ENCODE measurements at regions of chr19 and their contacts with region 1.

Region 1: GRCh38 chr19:47190167-47190727 is 40.8 kb downstream of the BBC3 start:
- DNase-seq: peak in 8 of 9 experiments; percentile 18 to 80 (median 59)
- ATAC-seq: peak; percentile 39
- H3K4me3 ChIP-seq: no peak overlapping the region
- H3K4me3 Mint-ChIP-seq: peak overlapping the region; percentile 38
- H3K27ac ChIP-seq: peak overlapping the region in 1 of 2 experiments; percentile 9
- H3K27ac Mint-ChIP-seq: peak overlapping the region; percentile 94
- H3K4me1 ChIP-seq: peaks cover 70% of the 10 kb centered on the region
- H3K4me1 Mint-ChIP-seq: peaks cover 65% of the 10 kb centered on the region
- H3K27me3 ChIP-seq: no peaks in the 10 kb centered on the region
- H3K27me3 Mint-ChIP-seq: no peaks in the 10 kb centered on the region
- CTCF ChIP-seq: no peak

Region 2: GRCh38 chr19:46944918-46945628 is 245.2 kb before region 1 on chr19:
- CTCF ChIA-PET with region 1: no interaction called
- POLR2A ChIA-PET with region 1: no interaction called
- intact Hi-C with region 1: no loop called
- DNase-seq: peak in 1 of 9 experiments; percentile 15
- ATAC-seq: no peak
- H3K4me3 ChIP-seq: no peak overlapping the region
- H3K4me3 Mint-ChIP-seq: no peak overlapping the region
- H3K27ac ChIP-seq: no peak overlapping the region
- H3K27ac Mint-ChIP-seq: no peak overlapping the region
- H3K4me1 ChIP-seq: no peaks in the 10 kb centered on the region
- H3K4me1 Mint-ChIP-seq: peaks cover 36% of the 10 kb centered on the region
- H3K27me3 ChIP-seq: no peaks in the 10 kb centered on the region
- H3K27me3 Mint-ChIP-seq: no peaks in the 10 kb centered on the region
- CTCF ChIP-seq: no peak

Region 3: DNA sequence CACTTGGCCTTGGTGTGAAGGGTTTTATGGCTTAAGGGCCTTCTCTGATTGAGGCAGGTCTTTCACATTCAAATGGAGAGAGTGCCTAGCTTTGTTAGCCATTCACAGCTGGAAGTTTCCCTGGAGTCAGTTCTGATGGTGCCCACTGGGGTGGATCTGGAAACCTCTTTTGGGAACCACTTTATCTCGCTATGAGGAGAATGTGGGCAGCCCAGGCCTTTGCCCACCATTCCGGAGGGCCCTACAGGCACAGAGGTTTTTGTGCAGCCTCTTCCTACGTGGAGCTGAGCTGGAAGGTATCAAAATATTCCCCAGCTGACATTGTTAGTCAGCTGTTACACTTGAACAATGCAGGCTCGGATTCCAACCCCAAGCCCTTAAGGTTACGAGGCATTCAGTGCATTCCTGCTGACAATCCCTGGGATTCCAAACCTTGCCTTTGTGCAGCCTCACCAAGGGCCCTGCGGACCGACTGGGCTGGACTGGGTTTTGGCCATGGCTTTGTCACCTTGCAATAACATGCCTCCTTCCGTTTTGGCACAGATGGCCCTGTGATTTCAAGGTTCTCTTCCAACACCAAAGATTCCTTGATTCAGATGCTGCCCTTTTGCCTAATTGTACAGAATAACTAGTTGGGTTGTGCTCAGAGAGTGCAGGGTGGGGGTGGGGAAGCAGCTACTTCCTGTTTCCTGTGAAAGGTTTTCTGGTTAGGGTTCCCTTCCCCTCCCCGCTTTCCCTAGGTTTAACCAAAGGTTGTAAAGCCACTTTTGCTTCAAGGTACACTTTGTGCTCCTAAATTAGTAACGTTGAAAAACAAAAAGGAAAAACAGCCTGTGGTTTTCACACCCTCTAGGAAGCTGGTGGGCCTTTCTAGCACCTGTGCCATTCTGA is 32.6 kb before region 1 on chr19:
- CTCF ChIA-PET with region 1: interaction called, 19 read pairs
- POLR2A ChIA-PET with region 1: interaction called, 36 read pairs
- intact Hi-C with region 1: loop called (anchors 1 kb)
- DNase-seq: peak in 6 of 9 experiments; percentile 37 to 80 (median 64)
- ATAC-seq: peak; percentile 22
- H3K4me3 ChIP-seq: peak overlapping the region; percentile 14 to 42
- H3K4me3 Mint-ChIP-seq: peak overlapping the region; percentile 74
- H3K27ac ChIP-seq: peak overlapping the region; percentile 41 to 48
- H3K27ac Mint-ChIP-seq: peak overlapping the region; percentile 95
- H3K4me1 ChIP-seq: peaks cover 61% of the 10 kb centered on the region
- H3K4me1 Mint-ChIP-seq: peaks cover 73% of the 10 kb centered on the region
- H3K27me3 ChIP-seq: no peaks in the 10 kb centered on the region
- H3K27me3 Mint-ChIP-seq: no peaks in the 10 kb centered on the region
- CTCF ChIP-seq: no peak

Region 4: DNA sequence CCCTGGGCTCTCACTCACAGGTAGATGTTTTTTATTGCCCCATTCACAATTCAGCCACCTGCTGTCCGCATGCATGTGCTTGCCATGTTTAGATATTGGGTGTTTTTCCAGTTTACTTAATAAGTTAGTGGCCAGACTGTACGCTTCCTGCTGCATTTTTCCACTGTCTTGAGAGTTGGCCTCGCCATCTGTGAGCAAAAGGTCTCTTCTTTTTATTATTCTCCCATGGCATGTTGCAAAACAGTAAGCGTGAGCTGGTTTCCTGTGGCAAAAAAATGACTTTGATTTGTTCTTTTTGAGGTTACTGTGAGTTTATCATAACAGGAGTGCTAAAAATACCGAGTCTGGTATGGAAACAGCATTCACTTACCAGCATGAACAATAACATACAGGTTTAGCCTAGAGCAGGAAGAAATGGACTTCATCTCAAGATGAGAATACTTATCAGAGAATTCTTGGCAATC is 13.6 kb before region 1 on chr19:
- CTCF ChIA-PET with region 1: interaction called, 20 read pairs
- POLR2A ChIA-PET with region 1: interaction called, 47 read pairs
- intact Hi-C with region 1: loop called (anchors 1 kb)
- DNase-seq: peak in 8 of 9 experiments; percentile 12 to 77 (median 48)
- ATAC-seq: peak; percentile 85
- H3K4me3 ChIP-seq: peak overlapping the region in 1 of 2 experiments; percentile 2
- H3K4me3 Mint-ChIP-seq: peak overlapping the region; percentile 64
- H3K27ac ChIP-seq: peak overlapping the region; percentile 18 to 50
- H3K27ac Mint-ChIP-seq: peak overlapping the region; percentile 95
- H3K4me1 ChIP-seq: peaks cover 59% of the 10 kb centered on the region
- H3K4me1 Mint-ChIP-seq: peaks cover 69% of the 10 kb centered on the region
- H3K27me3 ChIP-seq: no peaks in the 10 kb centered on the region
- H3K27me3 Mint-ChIP-seq: no peaks in the 10 kb centered on the region
- CTCF ChIP-seq: no peak

Region 5: DNA sequence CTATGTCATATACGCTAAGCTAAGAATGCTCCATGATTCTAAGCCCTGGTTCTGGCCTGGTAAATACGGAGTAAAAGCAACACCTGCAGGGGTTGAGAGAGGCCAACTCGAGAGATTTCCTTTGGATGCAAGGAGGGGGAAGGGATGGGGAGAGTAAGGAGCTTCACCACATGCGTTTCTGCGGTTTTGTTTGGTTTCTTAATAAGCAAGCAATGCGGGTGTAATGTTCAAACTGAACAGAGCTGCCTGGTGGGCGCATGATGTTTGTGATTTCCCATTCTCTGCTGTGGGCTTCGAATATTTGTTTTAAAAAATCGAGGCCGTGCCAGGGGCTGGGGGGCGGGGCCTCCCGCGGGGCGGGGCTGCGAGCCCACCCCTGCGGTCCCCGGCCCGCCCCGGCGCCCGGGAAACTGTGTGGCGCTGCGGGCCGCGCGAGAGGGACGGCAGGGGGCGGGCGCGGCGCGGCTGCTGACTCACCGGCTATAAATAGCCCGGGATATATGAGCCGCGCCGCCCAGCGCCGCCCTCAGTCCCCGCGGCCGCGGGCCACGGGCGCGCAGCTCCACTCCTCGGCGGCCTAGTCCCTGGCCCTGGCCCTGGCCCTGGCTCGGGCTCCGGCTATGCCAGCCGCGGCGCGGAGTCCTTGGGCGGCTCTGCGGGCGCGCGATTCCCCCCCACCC is 35.6 kb after region 1 on chr19:
- CTCF ChIA-PET with region 1: interaction called, 9 read pairs
- POLR2A ChIA-PET with region 1: interaction called, 13 read pairs
- intact Hi-C with region 1: loop called (anchors 2 kb)
- DNase-seq: peak; percentile 80 to 95 (median 86)
- ATAC-seq: peak; percentile 47
- H3K4me3 ChIP-seq: peak overlapping the region; percentile 48 to 68
- H3K4me3 Mint-ChIP-seq: peak overlapping the region; percentile 81
- H3K27ac ChIP-seq: peak overlapping the region; percentile 73 to 89
- H3K27ac Mint-ChIP-seq: peak overlapping the region; percentile 92
- H3K4me1 ChIP-seq: peaks cover 40% of the 10 kb centered on the region
- H3K4me1 Mint-ChIP-seq: peaks cover 16% of the 10 kb centered on the region
- H3K27me3 ChIP-seq: no peaks in the 10 kb centered on the region
- H3K27me3 Mint-ChIP-seq: no peaks in the 10 kb centered on the region
- CTCF ChIP-seq: peak; percentile 51

Region 6: DNA sequence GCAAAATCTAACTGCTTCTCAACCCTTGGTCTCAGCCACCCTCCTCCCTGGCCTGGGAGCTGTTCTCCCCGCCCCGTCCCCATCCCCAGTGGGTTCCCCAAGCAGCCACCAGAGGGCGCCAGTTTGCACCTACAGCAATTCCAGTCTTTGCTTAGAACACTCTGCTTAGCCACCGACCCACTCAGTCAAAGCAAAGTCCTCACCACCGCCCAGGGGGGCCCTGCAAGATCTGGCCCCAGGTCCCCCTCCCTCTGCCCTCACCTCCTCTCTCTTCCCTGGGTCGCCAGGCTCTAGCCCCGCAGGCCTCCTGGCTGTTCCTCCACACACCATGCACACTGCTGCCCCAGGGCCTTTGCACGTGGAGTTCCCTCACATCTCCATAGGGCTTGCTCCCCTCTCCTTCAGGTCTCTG is 1161.1 kb after region 1 on chr19:
- CTCF ChIA-PET with region 1: no interaction called
- POLR2A ChIA-PET with region 1: no interaction called
- intact Hi-C with region 1: no loop called
- DNase-seq: peak; percentile 62 to 86 (median 78)
- ATAC-seq: peak; percentile 83
- H3K4me3 ChIP-seq: no peak overlapping the region
- H3K4me3 Mint-ChIP-seq: no peak overlapping the region
- H3K27ac ChIP-seq: no peak overlapping the region
- H3K27ac Mint-ChIP-seq: no peak overlapping the region
- H3K4me1 ChIP-seq: no peaks in the 10 kb centered on the region
- H3K4me1 Mint-ChIP-seq: peaks cover 3% of the 10 kb centered on the region
- H3K27me3 ChIP-seq: no peaks in the 10 kb centered on the region
- H3K27me3 Mint-ChIP-seq: no peaks in the 10 kb centered on the region
- CTCF ChIP-seq: peak; percentile 62

Measured in CD8-positive, alpha-beta T cell (primary cell).